HepG2 (cell line): ENCODE measurements at regions of chr7 and their contacts with region 1.

Region 1: DNA sequence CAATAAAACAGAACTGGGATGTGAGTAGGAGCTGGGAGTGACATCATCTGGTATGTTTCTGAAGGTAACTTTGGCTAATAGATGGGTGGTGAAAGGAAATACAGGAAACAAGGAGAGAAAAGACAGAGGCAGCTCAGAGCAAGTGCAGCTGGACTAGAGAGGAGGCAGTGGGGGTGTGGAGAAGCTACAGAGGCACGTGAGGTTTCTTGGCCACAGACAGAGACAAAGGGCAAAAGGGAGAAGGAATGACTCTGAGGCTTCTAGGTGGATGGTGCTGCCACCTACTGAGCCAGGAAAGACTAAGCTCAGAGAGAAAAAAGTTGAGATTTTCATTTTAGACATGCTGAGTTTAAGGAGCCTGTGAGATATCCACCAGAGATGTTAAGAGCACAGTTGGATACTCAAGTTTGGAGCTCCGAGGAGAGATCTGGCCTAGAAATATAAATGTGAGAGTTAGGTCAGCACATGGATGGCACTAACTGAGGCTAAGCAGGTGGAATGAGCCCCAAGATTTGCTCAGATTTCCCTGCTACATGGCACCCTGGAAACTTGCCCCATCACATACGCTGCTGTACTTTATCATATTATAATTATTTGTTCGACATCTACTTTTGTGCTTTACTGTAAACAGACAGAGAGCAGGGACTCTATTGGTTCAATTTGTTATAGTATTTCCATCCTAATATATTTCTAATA is 293.0 kb upstream of the IMMP2L start:
- DNase-seq: peak; percentile 21
- ATAC-seq: peak; percentile 87
- H3K4me3 ChIP-seq: no peak overlapping the region
- H3K27ac ChIP-seq: no peak overlapping the region
- H3K4me1 ChIP-seq: no peaks in the 10 kb centered on the region
- H3K27me3 ChIP-seq: no peaks in the 10 kb centered on the region
- CTCF ChIP-seq: peak; percentile 66
- EP300 ChIP-seq: no peak
- POLR2A ChIP-seq: no peak
- RAD21 ChIP-seq: no peak

Region 2: DNA sequence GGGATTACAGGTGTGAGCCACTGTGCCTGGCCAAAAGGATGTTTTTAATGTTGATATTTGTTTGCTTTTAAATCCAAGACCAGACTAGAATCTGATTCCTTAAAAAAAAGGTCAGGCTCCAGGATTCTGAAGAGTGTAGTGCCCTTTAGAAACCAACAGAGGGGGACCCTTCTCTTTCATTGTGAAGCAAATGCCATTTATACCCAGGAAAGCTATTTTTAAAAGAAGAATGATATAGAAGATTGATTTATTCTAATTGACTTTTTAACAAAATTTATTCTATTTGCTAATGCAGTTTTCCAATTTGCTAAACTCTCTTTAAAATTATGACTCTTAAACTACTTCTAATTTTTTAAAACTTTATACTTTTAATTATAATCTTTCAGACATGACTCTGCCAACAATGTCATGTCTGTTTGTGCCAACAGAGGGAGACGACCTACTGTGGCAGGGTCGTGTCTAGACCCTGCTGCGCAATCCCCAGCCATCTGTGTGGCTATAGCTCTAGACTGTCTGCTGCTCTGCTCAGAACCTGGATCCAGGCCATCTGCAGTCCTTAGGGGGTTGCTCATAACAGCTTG is 92.0 kb before region 1 on chr7:
- CTCF ChIA-PET with region 1: interaction called, 15 read pairs
- POLR2A ChIA-PET with region 1: interaction called, 3 read pairs
- in situ Hi-C with region 1: loop called (anchors 5 kb)
- intact Hi-C with region 1: loop called (anchors 1 kb)
- DNase-seq: peak; percentile 42
- ATAC-seq: peak; percentile 90
- H3K4me3 ChIP-seq: no peak overlapping the region
- H3K27ac ChIP-seq: no peak overlapping the region
- H3K4me1 ChIP-seq: no peaks in the 10 kb centered on the region
- H3K27me3 ChIP-seq: no peaks in the 10 kb centered on the region; a peak in 1 of 5 replicates
- CTCF ChIP-seq: no peak
- EP300 ChIP-seq: no peak
- POLR2A ChIP-seq: no peak
- RAD21 ChIP-seq: peak; percentile 15; the same call in 1 of the 2 replicates

Region 3: GRCh38 chr7:112495810-112496462 is 640.6 kb after region 1 on chr7:
- CTCF ChIA-PET with region 1: no interaction called
- POLR2A ChIA-PET with region 1: no interaction called
- in situ Hi-C with region 1: no loop called
- intact Hi-C with region 1: loop called (anchors 10 kb)
- DNase-seq: peak; percentile 48
- ATAC-seq: peak; percentile 91
- H3K4me3 ChIP-seq: no peak overlapping the region
- H3K27ac ChIP-seq: no peak overlapping the region
- H3K4me1 ChIP-seq: peaks cover 10% of the 10 kb centered on the region; the same call in 1 of the 2 replicates
- H3K27me3 ChIP-seq: no peaks in the 10 kb centered on the region; a peak in 1 of 5 replicates
- CTCF ChIP-seq: peak; percentile 79
- EP300 ChIP-seq: no peak
- POLR2A ChIP-seq: no peak
- RAD21 ChIP-seq: peak; percentile 65; the same call in 1 of the 2 replicates